ENCODE measurements at regions of chr12 and their contacts with region 1.

Region 1: GRCh38 chr12:25250744-25251730 is at the start of gene KRAS:
- DNase-seq: peak; percentile 91
- ATAC-seq: peak; percentile 88
- H3K4me3 Mint-ChIP-seq: peak within 1 kb of the TSS; percentile 94
- H3K27ac Mint-ChIP-seq: peak within 1 kb of the TSS; percentile 92
- H3K4me1 Mint-ChIP-seq: peaks cover 25% of the 10 kb centered on the region
- H3K27me3 Mint-ChIP-seq: no peaks in the 10 kb centered on the region
- total RNA-seq, gene KRAS: 33.7 to 36.1 TPM

Region 2: DNA sequence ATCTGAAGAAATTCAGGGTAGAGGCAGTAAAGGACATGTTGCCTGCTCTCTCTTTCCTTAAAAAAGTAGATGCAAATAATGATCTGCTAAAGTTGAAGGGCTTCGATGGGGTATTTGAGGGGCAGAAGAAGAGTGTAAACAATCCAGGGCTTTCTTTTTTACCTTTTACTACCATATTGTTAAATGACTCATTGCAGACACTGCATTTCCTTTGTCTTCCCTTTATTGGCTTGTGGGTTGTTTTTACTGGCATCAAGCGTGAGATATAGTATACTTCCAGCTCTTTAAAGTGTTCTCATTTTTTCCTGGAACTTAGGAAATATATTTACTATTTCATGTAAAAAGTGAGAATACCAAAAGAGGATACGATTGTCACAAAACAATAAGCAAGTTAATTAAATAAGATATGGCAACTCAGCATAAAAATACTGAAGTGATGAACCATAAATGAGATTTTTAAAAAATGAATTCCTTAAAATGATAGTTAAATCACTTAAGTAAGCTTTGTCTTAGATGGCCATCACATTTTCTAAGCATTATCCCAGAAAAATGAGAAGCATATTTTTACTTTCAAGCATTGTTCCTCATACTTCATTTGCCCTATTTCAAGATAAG is 72.0 kb after region 1 on chr12:
- POLR2A ChIA-PET with region 1: interaction called, 16 read pairs
- DNase-seq: no peak
- ATAC-seq: peak; percentile 38
- H3K4me3 Mint-ChIP-seq: peak overlapping the region; percentile 85
- H3K27ac Mint-ChIP-seq: peak overlapping the region; percentile 94
- H3K4me1 Mint-ChIP-seq: peaks cover 37% of the 10 kb centered on the region
- H3K27me3 Mint-ChIP-seq: no peaks in the 10 kb centered on the region

Region 3: GRCh38 chr12:25364529-25365339 is 113.7 kb after region 1 on chr12:
- POLR2A ChIA-PET with region 1: interaction called, 17 read pairs
- DNase-seq: no peak
- ATAC-seq: peak; percentile 80
- H3K4me3 Mint-ChIP-seq: peak overlapping the region; percentile 72
- H3K27ac Mint-ChIP-seq: peak overlapping the region; percentile 86
- H3K4me1 Mint-ChIP-seq: peaks cover 15% of the 10 kb centered on the region
- H3K27me3 Mint-ChIP-seq: no peaks in the 10 kb centered on the region

Region 4: GRCh38 chr12:25377469-25378177 is 126.6 kb after region 1 on chr12:
- POLR2A ChIA-PET with region 1: interaction called, 10 read pairs
- DNase-seq: no peak
- ATAC-seq: peak; percentile 95
- H3K4me3 Mint-ChIP-seq: peak overlapping the region; percentile 67
- H3K27ac Mint-ChIP-seq: peak overlapping the region; percentile 89
- H3K4me1 Mint-ChIP-seq: peaks cover 37% of the 10 kb centered on the region
- H3K27me3 Mint-ChIP-seq: no peaks in the 10 kb centered on the region

Measured in activated naive CD8-positive, alpha-beta T cell treated with anti-CD3 and anti-CD28 coated beads, Interleukin-2, amount 10 ng/mL, durations not matched to agents 7 days and 5 days (primary cell).